Naive thymus-derived CD4-positive, alpha-beta T cell (primary cell): ENCODE measurements at regions of chr3 and their contacts with region 1.

Region 1: DNA sequence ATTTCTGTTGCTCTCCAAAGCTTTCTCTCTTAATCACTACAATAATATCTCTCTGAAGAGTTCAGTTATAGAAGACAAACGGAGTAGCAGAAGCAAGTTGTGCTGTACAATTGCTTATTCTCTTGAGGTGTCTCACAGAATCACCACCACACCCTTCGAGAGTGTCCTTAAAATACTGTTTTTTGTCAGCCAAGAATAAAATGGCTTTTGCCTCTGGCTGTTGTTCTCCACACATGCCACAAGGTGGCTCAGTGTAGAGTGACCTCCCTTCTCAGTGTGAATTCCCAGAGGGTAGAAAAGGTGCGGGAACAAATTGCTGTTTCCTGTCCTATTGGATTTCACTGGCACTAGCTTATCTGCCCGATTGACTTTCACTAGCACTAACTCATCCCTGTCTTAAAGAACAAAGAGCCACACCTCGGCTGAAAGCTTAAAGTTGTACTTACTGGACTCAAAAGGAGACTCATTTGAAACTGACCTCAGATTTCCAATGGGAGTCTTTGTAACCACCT is 134.2 kb upstream of the SATB1 start:
- DNase-seq: peak; percentile 9 to 57 (median 32)
- ATAC-seq: peak; percentile 77
- H3K4me3 ChIP-seq: no peak overlapping the region
- H3K4me3 Mint-ChIP-seq: peak overlapping the region; percentile 40 to 79 (median 67)
- H3K27ac ChIP-seq: no peak overlapping the region
- H3K27ac Mint-ChIP-seq: peak overlapping the region; percentile 63 to 89 (median 79)
- H3K4me1 ChIP-seq: peaks cover 13 to 19% of the 10 kb centered on the region in 2 donors
- H3K4me1 Mint-ChIP-seq: peaks cover 22 to 67% (median 61%) of the 10 kb centered on the region in 7 donors
- H3K27me3 ChIP-seq: no peaks in the 10 kb centered on the region
- H3K27me3 Mint-ChIP-seq: no peaks in the 10 kb centered on the region

Region 2: GRCh38 chr3:18424729-18425640 is 134.4 kb before region 1 on chr3 and contains the start of gene SATB1:
- CTCF ChIA-PET with region 1: no interaction called
- POLR2A ChIA-PET with region 1: no interaction called
- intact Hi-C with region 1: no loop called
- DNase-seq: peak; percentile 55 to 72 (median 67)
- ATAC-seq: peak; percentile 62
- H3K4me3 ChIP-seq: peak within 1 kb of the TSS; percentile 72
- H3K4me3 Mint-ChIP-seq: peak within 1 kb of the TSS; percentile 91 to 100 (median 98)
- H3K27ac ChIP-seq: peak within 1 kb of the TSS; percentile 97
- H3K27ac Mint-ChIP-seq: peak within 1 kb of the TSS; percentile 87 to 99 (median 98)
- H3K4me1 ChIP-seq: peaks cover 8 to 21% of the 10 kb centered on the region in 2 donors
- H3K4me1 Mint-ChIP-seq: peaks cover 41 to 72% (median 62%) of the 10 kb centered on the region in 7 donors
- H3K27me3 ChIP-seq: no peaks in the 10 kb centered on the region
- H3K27me3 Mint-ChIP-seq: peaks cover 0 to 2% (median 0%) of the 10 kb centered on the region in 5 donors
- total RNA-seq, gene SATB1: 258 to 482 (median 451) TPM

Region 3: GRCh38 chr3:18546632-18547031 is 12.8 kb before region 1 on chr3:
- CTCF ChIA-PET with region 1: interaction called, 3 read pairs
- POLR2A ChIA-PET with region 1: no interaction called
- intact Hi-C with region 1: loop called in 1 of 2 experiments (anchors 1 kb)
- DNase-seq: no peak
- ATAC-seq: no peak
- H3K4me3 ChIP-seq: no peak overlapping the region
- H3K4me3 Mint-ChIP-seq: no peak overlapping the region
- H3K27ac ChIP-seq: no peak overlapping the region
- H3K27ac Mint-ChIP-seq: no peak overlapping the region
- H3K4me1 ChIP-seq: no peaks in the 10 kb centered on the region
- H3K4me1 Mint-ChIP-seq: peaks cover 0 to 4% (median 0%) of the 10 kb centered on the region in 7 donors
- H3K27me3 ChIP-seq: no peaks in the 10 kb centered on the region
- H3K27me3 Mint-ChIP-seq: no peaks in the 10 kb centered on the region

Region 4: DNA sequence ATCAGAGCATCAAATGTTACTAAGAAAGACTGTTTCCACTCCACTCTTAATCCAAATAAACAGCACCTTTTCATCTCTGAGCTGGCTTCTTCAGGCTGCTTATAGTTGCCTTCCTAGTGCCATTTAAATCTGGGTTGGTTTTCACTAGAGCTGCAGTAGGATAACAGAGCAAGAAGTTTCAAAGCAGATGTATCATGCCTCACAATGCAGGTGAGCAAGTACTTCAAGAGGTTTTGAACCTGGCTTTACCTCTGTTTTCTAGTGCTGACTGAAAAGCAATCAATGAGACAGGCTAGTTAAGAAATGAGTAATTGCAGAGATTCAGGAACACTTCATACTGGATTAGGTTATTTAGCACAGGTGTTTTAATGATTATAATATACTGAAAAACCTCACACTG is 13.4 kb after region 1 on chr3:
- CTCF ChIA-PET with region 1: interaction called, 17 read pairs
- POLR2A ChIA-PET with region 1: interaction called, 4 read pairs
- intact Hi-C with region 1: no loop called
- DNase-seq: no peak
- ATAC-seq: no peak
- H3K4me3 ChIP-seq: no peak overlapping the region
- H3K4me3 Mint-ChIP-seq: no peak overlapping the region
- H3K27ac ChIP-seq: no peak overlapping the region
- H3K27ac Mint-ChIP-seq: no peak overlapping the region
- H3K4me1 ChIP-seq: no peaks in the 10 kb centered on the region
- H3K4me1 Mint-ChIP-seq: peaks cover 0 to 12% (median 5%) of the 10 kb centered on the region in 7 donors
- H3K27me3 ChIP-seq: no peaks in the 10 kb centered on the region
- H3K27me3 Mint-ChIP-seq: no peaks in the 10 kb centered on the region

Region 5: DNA sequence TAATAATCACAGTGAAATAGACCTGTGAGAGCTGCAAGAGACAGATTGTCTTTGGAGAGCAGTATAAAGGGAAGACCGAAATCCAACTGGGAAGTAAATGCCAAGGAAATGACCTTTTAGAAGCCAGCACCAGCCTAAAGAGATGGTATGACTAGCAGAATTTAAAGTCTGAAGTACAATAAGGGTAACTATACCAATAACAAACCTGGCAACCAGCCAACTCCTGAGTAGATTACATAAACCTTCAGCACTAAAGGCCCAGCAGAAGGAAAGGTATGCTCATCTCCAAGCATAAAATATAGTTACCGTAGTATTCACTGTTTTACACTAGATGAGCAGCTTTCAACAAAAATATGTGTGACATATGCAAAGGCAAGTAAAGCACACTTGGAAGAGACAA is 20.9 kb after region 1 on chr3:
- CTCF ChIA-PET with region 1: no interaction called
- POLR2A ChIA-PET with region 1: no interaction called
- intact Hi-C with region 1: loop called in 1 of 2 experiments (anchors 2 kb)
- DNase-seq: peak in 4 of 9 donors; percentile 19 to 29 (median 21)
- ATAC-seq: no peak
- H3K4me3 ChIP-seq: no peak overlapping the region
- H3K4me3 Mint-ChIP-seq: no peak overlapping the region
- H3K27ac ChIP-seq: no peak overlapping the region
- H3K27ac Mint-ChIP-seq: peak overlapping the region in 1 of 9 donors; percentile 24
- H3K4me1 ChIP-seq: no peaks in the 10 kb centered on the region
- H3K4me1 Mint-ChIP-seq: peaks cover 6 to 26% (median 17%) of the 10 kb centered on the region in 7 donors
- H3K27me3 ChIP-seq: no peaks in the 10 kb centered on the region
- H3K27me3 Mint-ChIP-seq: no peaks in the 10 kb centered on the region

Region 6: GRCh38 chr3:18649666-18650363 is 90.4 kb after region 1 on chr3:
- CTCF ChIA-PET with region 1: no interaction called
- POLR2A ChIA-PET with region 1: no interaction called
- intact Hi-C with region 1: loop called in 1 of 2 experiments (anchors 2 kb)
- DNase-seq: peak in 8 of 9 donors; percentile 21 to 53 (median 33)
- ATAC-seq: peak; percentile 41
- H3K4me3 ChIP-seq: no peak overlapping the region
- H3K4me3 Mint-ChIP-seq: peak overlapping the region in 8 of 10 donors; percentile 14 to 66 (median 28)
- H3K27ac ChIP-seq: no peak overlapping the region
- H3K27ac Mint-ChIP-seq: peak overlapping the region; percentile 17 to 89 (median 56)
- H3K4me1 ChIP-seq: peaks cover 0 to 12% of the 10 kb centered on the region in 2 donors
- H3K4me1 Mint-ChIP-seq: peaks cover 22 to 77% (median 30%) of the 10 kb centered on the region in 7 donors
- H3K27me3 ChIP-seq: no peaks in the 10 kb centered on the region
- H3K27me3 Mint-ChIP-seq: no peaks in the 10 kb centered on the region

Region 7: DNA sequence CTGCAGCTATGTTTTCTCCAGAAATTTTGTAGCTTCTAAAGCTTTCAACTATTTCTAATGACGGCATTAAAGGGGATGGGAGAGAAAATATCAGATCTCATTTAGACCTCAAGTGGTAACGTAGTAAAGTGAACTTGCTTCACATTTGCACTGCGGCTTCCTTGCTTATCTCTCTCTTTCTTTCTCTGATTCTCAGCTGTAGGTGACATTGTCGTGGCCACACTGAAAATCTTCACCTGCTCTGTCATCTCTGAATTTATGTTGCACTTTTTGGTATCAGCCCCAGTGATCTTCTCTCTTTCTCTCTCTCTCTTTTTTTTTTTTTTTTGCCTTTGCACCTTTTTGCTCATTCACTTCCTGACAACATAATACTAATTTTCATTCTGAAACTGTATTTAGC is 119.9 kb after region 1 on chr3:
- CTCF ChIA-PET with region 1: interaction called, 5 read pairs
- POLR2A ChIA-PET with region 1: interaction called, 3 read pairs
- intact Hi-C with region 1: loop called (anchors 1 kb)
- DNase-seq: peak in 8 of 9 donors; percentile 26 to 65 (median 42)
- ATAC-seq: peak; percentile 91
- H3K4me3 ChIP-seq: no peak overlapping the region
- H3K4me3 Mint-ChIP-seq: peak overlapping the region; percentile 30 to 79 (median 72)
- H3K27ac ChIP-seq: peak overlapping the region; percentile 35
- H3K27ac Mint-ChIP-seq: peak overlapping the region; percentile 53 to 90 (median 80)
- H3K4me1 ChIP-seq: peaks cover 34 to 46% of the 10 kb centered on the region in 2 donors
- H3K4me1 Mint-ChIP-seq: peaks cover 37 to 83% (median 75%) of the 10 kb centered on the region in 7 donors
- H3K27me3 ChIP-seq: no peaks in the 10 kb centered on the region
- H3K27me3 Mint-ChIP-seq: no peaks in the 10 kb centered on the region

Region 8: DNA sequence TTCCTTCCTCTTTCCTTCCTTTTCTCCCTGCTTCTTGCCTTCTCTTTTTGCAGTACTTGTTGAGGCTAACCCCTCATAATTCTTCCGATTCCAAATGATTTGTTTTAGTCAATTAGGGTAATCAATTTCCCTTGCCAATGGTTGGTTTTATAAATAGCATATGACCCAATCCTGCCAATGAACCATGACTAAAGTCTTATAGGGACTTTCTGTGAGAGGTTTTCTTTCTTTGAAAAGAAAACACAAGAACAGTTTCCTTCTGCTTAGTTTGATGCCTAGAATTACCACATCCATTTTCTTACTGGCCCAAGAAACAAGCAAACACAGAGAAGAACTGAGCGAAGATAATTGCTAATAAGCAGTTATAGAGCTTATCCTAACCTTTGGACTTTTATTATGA is 158.2 kb after region 1 on chr3:
- CTCF ChIA-PET with region 1: interaction called, 8 read pairs
- POLR2A ChIA-PET with region 1: interaction called, 3 read pairs
- intact Hi-C with region 1: loop called in 1 of 2 experiments (anchors 1 kb)
- DNase-seq: peak in 1 of 9 donors; percentile 14
- ATAC-seq: no peak
- H3K4me3 ChIP-seq: no peak overlapping the region
- H3K4me3 Mint-ChIP-seq: peak overlapping the region in 8 of 10 donors; percentile 28 to 78 (median 60)
- H3K27ac ChIP-seq: no peak overlapping the region
- H3K27ac Mint-ChIP-seq: peak overlapping the region; percentile 20 to 95 (median 77)
- H3K4me1 ChIP-seq: peaks cover 43 to 50% of the 10 kb centered on the region in 2 donors
- H3K4me1 Mint-ChIP-seq: peaks cover 50 to 85% (median 71%) of the 10 kb centered on the region in 7 donors
- H3K27me3 ChIP-seq: no peaks in the 10 kb centered on the region
- H3K27me3 Mint-ChIP-seq: no peaks in the 10 kb centered on the region

Region 9: GRCh38 chr3:19202303-19202702 is 642.9 kb after region 1 on chr3:
- CTCF ChIA-PET with region 1: no interaction called
- POLR2A ChIA-PET with region 1: no interaction called
- intact Hi-C with region 1: no loop called
- DNase-seq: no peak
- ATAC-seq: no peak
- H3K4me3 ChIP-seq: no peak overlapping the region
- H3K4me3 Mint-ChIP-seq: no peak overlapping the region
- H3K27ac ChIP-seq: no peak overlapping the region
- H3K27ac Mint-ChIP-seq: no peak overlapping the region
- H3K4me1 ChIP-seq: no peaks in the 10 kb centered on the region
- H3K4me1 Mint-ChIP-seq: no peaks in the 10 kb centered on the region
- H3K27me3 ChIP-seq: no peaks in the 10 kb centered on the region
- H3K27me3 Mint-ChIP-seq: peaks cover 3 to 13% (median 9%) of the 10 kb centered on the region in 5 donors